IMR-90 (cell line): ENCODE measurements at regions of chr7 and their contacts with region 1.

Region 1: GRCh38 chr7:55572378-55573233 is at the start of gene VOPP1:
- DNase-seq: peak; percentile 63
- ATAC-seq: peak; percentile 74
- H3K4me3 ChIP-seq: peak within 1 kb of the TSS; percentile 67
- H3K27ac ChIP-seq: peak within 1 kb of the TSS; percentile 92
- H3K4me1 ChIP-seq: peaks cover 28% of the 10 kb centered on the region
- H3K27me3 ChIP-seq: no peaks in the 10 kb centered on the region
- CTCF ChIP-seq: no peak
- POLR2A ChIP-seq: no peak
- RAD21 ChIP-seq: no peak
- total RNA-seq, gene VOPP1: 94.5 and 94.7 TPM in 2 replicates

Region 2: DNA sequence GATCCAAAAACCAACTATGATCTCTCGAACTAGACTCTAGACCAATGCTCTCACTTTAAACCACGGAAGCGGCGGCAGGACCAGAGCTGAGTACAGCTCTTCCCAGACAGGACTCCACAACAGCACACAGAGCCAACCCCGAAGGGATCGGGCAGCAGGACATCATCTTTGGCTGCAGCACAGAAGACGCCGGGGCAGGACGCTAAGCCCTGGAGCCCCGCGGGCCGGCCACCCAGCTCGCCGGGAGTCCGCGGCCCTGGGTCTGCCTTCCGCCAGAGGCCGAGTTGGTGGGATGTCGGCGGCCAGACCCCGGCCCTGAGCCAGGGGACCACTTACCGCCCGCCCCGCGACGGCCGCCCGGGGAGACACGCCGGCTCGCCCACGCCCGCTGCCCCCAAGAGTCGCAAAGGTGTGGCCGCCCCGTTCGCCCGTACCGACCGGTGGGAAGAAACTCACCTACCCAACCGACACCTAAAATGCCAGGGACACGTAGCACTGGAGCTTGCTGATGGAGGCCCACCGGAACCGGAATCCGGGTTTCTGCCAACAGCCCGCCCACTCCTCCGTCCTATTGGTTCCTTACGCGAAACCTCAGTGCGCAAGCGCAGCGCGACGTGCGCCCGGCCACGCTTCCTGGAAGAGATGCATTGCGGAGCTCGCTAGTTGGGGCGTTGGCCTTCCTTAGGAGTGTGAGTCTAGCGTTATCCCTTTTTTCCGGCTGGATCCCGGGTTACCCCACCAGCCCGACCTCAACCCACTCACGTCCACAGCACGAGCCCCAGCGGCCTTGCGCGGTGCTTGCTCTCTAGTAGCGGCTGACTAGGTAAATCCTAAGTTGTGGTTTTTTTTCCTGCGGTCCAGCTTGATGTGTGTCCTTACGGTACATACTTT is 813.7 kb before region 1 on chr7 and contains the start of gene SEC61G:
- CTCF ChIA-PET with region 1: no interaction called
- POLR2A ChIA-PET with region 1: no interaction called
- dilution Hi-C with region 1: no loop called
- in situ Hi-C with region 1: loop called (anchors 25 kb)
- intact Hi-C with region 1: no loop called
- DNase-seq: peak; percentile 97
- ATAC-seq: peak; percentile 94
- H3K4me3 ChIP-seq: peak within 1 kb of the TSS; percentile 67
- H3K27ac ChIP-seq: peak within 1 kb of the TSS; percentile 94
- H3K4me1 ChIP-seq: no peaks in the 10 kb centered on the region; the same call in 1 of the 2 replicates
- H3K27me3 ChIP-seq: no peaks in the 10 kb centered on the region
- CTCF ChIP-seq: no peak
- POLR2A ChIP-seq: peak; percentile 95
- RAD21 ChIP-seq: no peak
- total RNA-seq, gene SEC61G: 387 and 3,014 TPM in 2 replicates

Region 3: GRCh38 chr7:55365675-55366460 is 206.7 kb before region 1 on chr7:
- CTCF ChIA-PET with region 1: no interaction called
- POLR2A ChIA-PET with region 1: no interaction called
- dilution Hi-C with region 1: no loop called
- in situ Hi-C with region 1: no loop called
- intact Hi-C with region 1: loop called (anchors 1 kb)
- DNase-seq: peak; percentile 96
- ATAC-seq: peak; percentile 93
- H3K4me3 ChIP-seq: peak overlapping the region; percentile 91
- H3K27ac ChIP-seq: peak overlapping the region; percentile 96
- H3K4me1 ChIP-seq: peaks cover 7% of the 10 kb centered on the region
- H3K27me3 ChIP-seq: no peaks in the 10 kb centered on the region
- CTCF ChIP-seq: peak; percentile 32
- POLR2A ChIP-seq: peak; percentile 88
- RAD21 ChIP-seq: peak; percentile 7; the same call in 1 of the 2 replicates

Region 4: GRCh38 chr7:55432939-55433784 is 139.4 kb before region 1 on chr7:
- CTCF ChIA-PET with region 1: interaction called, 3 read pairs
- POLR2A ChIA-PET with region 1: no interaction called
- dilution Hi-C with region 1: no loop called
- in situ Hi-C with region 1: no loop called
- intact Hi-C with region 1: loop called (anchors 1 kb)
- DNase-seq: peak; percentile 59
- ATAC-seq: peak; percentile 70
- H3K4me3 ChIP-seq: no peak overlapping the region
- H3K27ac ChIP-seq: no peak overlapping the region
- H3K4me1 ChIP-seq: peaks cover 4% of the 10 kb centered on the region; the same call in 1 of the 2 replicates
- H3K27me3 ChIP-seq: no peaks in the 10 kb centered on the region
- CTCF ChIP-seq: peak; percentile 63
- POLR2A ChIP-seq: no peak
- RAD21 ChIP-seq: peak; percentile 71

Region 5: GRCh38 chr7:55477781-55478374 is 94.7 kb before region 1 on chr7:
- CTCF ChIA-PET with region 1: no interaction called
- POLR2A ChIA-PET with region 1: no interaction called
- dilution Hi-C with region 1: no loop called
- in situ Hi-C with region 1: no loop called
- intact Hi-C with region 1: loop called (anchors 2 kb)
- DNase-seq: peak; percentile 96
- ATAC-seq: peak; percentile 89
- H3K4me3 ChIP-seq: no peak overlapping the region
- H3K27ac ChIP-seq: peak overlapping the region; percentile 45
- H3K4me1 ChIP-seq: peaks cover 30% of the 10 kb centered on the region
- H3K27me3 ChIP-seq: no peaks in the 10 kb centered on the region
- CTCF ChIP-seq: no peak
- POLR2A ChIP-seq: peak; percentile 17; the same call in 1 of the 2 replicates
- RAD21 ChIP-seq: no peak

Region 6: DNA sequence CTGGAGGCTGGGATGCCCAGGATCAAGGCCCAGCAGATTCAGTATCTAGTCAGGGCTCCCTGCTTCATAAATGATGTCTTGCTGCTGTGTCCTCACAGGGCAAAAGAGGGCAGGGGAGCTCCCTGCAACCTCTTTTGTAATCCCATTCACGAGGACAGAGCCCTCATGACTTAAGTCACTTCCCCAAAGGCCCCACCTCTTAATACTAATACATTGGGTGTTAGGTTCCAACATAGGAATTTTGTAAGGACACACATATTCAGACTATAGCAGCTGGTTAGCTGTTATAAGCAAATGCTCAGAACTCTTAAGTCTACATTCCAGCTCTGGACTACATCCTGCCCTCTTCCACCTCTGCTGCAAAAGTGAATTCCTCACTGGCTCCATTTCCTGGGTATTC is 63.3 kb before region 1 on chr7:
- CTCF ChIA-PET with region 1: no interaction called
- POLR2A ChIA-PET with region 1: no interaction called
- dilution Hi-C with region 1: no loop called
- in situ Hi-C with region 1: no loop called
- intact Hi-C with region 1: loop called (anchors 1 kb)
- DNase-seq: peak; percentile 83
- ATAC-seq: peak; percentile 86
- H3K4me3 ChIP-seq: no peak overlapping the region
- H3K27ac ChIP-seq: peak overlapping the region; percentile 36; the same call in 1 of the 2 replicates
- H3K4me1 ChIP-seq: peaks cover 20% of the 10 kb centered on the region
- H3K27me3 ChIP-seq: no peaks in the 10 kb centered on the region
- CTCF ChIP-seq: 0 out of 2 replicates have a peak, but pooled peaks have one; percentile 2
- POLR2A ChIP-seq: no peak
- RAD21 ChIP-seq: no peak

Region 7: DNA sequence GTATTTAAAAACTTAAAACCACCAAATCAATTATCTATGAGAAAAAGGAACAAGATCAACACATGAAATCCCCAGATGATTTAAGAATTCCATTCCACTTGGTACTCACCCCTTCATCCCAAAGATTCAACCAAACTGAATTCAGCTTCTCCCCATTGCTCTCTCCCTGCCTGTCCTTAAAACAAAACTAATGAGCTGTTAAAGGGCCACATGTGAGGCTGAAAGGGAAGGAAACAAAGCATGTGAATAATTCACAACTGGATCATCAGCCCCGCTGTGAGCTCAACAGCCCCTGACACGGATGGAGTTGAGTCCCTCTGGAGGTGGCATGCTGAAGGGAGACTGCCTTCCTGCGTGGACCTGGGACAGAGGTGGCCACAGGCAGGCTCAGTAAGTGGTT is 33.2 kb before region 1 on chr7:
- CTCF ChIA-PET with region 1: no interaction called
- POLR2A ChIA-PET with region 1: no interaction called
- dilution Hi-C with region 1: no loop called
- in situ Hi-C with region 1: no loop called
- intact Hi-C with region 1: loop called (anchors 1 kb)
- DNase-seq: peak; percentile 61
- ATAC-seq: no peak; the same call in 1 of the 2 replicates
- H3K4me3 ChIP-seq: no peak overlapping the region
- H3K27ac ChIP-seq: peak overlapping the region; percentile 27; the same call in 1 of the 2 replicates
- H3K4me1 ChIP-seq: peaks cover 21% of the 10 kb centered on the region
- H3K27me3 ChIP-seq: no peaks in the 10 kb centered on the region
- CTCF ChIP-seq: no peak
- POLR2A ChIP-seq: no peak
- RAD21 ChIP-seq: no peak